ENCODE measurements at regions of chr17 and their contacts with region 1.

Region 1: GRCh38 chr17:39963829-39964228 is 1.0 kb downstream of the GSDMA start:
- DNase-seq: peak; percentile 74
- ATAC-seq: peak; percentile 33; the same call in 1 of the 2 replicates
- H3K4me3 ChIP-seq: no peak overlapping the region
- H3K27ac ChIP-seq: no peak overlapping the region
- H3K4me1 ChIP-seq: no peaks in the 10 kb centered on the region
- H3K27me3 ChIP-seq: no peaks in the 10 kb centered on the region
- CTCF ChIP-seq: no peak

Region 2: DNA sequence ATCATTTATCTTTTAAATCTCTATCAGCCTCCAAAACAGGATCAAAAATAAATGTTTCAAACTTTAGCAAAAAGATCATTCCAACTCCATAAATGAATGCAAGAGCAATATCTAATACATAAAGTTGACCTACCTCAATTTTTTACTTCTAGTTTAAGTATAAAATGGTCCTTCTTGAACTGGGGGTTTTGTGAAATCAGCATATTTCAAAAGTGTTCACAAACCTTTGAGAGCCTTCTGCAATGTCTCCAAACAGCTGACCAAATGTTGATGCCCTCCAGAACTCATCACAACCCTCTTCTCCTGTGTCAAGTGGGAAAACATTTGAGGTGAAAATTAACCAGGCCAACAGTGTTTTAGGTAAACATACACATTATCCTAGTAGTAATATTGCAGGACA is 520.5 kb before region 1 on chr17:
- CTCF ChIA-PET with region 1: no interaction called
- POLR2A ChIA-PET with region 1: no interaction called
- intact Hi-C with region 1: no loop called
- DNase-seq: no peak
- ATAC-seq: no peak
- H3K4me3 ChIP-seq: no peak overlapping the region
- H3K27ac ChIP-seq: no peak overlapping the region
- H3K4me1 ChIP-seq: no peaks in the 10 kb centered on the region
- H3K27me3 ChIP-seq: no peaks in the 10 kb centered on the region
- CTCF ChIP-seq: no peak

Region 3: DNA sequence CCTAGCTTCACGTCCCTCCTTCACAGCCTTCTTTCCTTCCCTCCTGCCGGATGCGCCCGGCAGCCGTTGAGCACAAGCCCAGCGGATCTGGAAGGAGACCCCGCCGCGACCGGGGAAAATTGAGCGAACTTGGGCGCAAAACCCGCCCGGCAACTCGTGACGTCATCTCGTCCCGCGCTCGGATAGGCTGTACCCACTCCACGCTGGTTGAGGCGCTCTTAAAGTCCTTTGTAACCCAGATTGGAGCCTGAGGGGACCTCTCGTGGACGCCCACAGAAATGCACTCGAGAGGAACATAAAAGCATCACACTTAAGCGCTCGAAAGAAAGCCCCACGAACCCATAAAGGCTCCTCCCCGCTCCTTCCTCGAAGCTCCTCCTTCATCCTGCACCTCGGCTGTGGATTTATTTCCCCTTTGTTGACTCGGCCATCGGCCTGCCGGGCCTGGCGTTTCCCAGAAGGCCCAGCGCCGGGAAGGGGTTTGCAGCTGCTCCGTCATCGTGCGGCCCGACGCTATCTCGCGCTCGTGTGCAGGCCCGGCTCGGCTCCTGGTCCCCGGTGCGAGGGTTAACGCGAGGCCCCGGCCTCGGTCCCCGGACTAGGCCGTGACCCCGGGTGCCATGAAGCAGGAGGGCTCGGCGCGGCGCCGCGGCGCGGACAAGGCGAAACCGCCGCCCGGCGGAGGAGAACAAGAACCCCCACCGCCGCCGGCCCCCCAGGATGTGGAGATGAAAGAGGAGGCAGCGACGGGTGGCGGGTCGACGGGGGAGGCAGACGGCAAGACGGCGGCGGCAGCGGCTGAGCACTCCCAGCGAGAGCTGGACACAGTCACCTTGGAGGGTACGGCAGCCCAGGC is 16.8 kb after region 1 on chr17 and contains the start of gene PSMD3:
- CTCF ChIA-PET with region 1: interaction called, 5 read pairs
- POLR2A ChIA-PET with region 1: no interaction called
- intact Hi-C with region 1: loop called (anchors 1 kb)
- DNase-seq: peak; percentile 97
- ATAC-seq: peak; percentile 93
- H3K4me3 ChIP-seq: peak within 1 kb of the TSS; percentile 98
- H3K27ac ChIP-seq: peak within 1 kb of the TSS; percentile 72
- H3K4me1 ChIP-seq: peaks cover 19% of the 10 kb centered on the region
- H3K27me3 ChIP-seq: no peaks in the 10 kb centered on the region
- CTCF ChIP-seq: peak; percentile 60
- total RNA-seq, gene PSMD3: 267 and 338 TPM in 2 replicates